Vagina (tissue), 2 donors: ENCODE measurements at regions of chr2 and their contacts with region 1.

Region 1: DNA sequence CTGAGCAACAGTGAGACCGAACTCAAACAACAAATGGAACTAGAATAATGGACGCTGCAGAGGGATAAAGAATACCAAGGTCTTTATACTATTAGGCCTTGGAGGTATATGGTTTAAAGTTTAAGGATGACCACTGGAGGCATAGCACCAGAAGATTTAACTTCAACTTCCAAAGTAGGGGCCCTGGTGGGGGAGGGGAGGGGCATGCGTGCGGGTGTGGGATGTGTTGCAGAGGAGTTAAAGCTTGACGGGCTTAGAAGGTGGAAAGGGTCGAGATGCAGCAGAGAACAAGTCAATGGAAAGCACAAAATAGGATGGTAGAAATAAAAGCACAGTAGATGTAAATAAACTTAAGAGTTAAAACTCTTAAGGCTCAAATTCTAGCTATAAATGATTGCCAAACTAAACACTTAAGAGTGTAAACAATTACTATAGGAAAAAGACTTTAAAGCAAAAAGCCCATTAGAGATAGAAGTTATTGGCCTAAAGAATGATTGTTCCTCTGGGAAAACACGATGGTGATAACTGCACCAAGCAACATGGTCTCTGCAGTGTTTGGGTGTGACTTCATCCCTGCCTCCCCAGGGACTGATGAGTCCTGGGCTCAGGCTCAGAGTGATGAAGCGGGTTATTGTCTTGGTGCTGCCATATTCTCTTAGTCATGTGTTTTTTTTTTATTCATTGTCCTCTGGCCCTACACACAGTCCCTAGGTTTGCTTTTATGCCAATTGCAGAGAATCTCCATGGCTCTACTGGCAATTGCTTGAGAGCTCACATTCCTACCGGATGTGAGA is 13.0 kb downstream of the RRM2 start:
- DNase-seq: no peak
- H3K4me3 ChIP-seq: no peak overlapping the region
- H3K27ac ChIP-seq: no peak overlapping the region
- H3K4me1 ChIP-seq: no peaks in the 10 kb centered on the region
- H3K27me3 ChIP-seq: no peaks in the 10 kb centered on the region
- CTCF ChIP-seq: no peak
- POLR2A ChIP-seq: no peak

Region 2: DNA sequence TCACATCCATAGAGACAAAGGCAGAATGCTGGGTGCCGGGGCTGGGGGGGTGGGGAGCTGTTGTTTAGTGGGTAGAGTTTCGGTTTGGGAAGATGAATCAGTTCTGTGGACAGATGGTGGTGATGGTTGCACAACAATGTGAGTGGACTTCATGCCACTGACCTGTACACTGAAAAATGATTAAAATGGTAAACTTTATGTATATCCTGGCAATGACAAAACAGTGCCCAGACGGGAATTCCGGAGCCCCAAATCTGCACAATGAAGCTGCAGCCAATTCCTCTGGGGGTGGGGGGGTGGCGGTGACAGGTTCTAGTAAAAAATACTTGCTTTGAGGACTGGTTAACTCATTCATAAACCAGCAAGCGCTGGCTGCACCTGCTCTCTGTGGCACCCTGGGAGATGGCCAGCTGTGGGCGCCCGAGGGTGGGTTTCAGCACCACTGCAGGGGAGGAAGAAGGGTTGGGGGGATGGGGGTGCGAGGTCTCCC is 85.5 kb after region 1 on chr2:
- intact Hi-C with region 1: no loop called
- DNase-seq: no peak
- H3K4me3 ChIP-seq: no peak overlapping the region
- H3K27ac ChIP-seq: no peak overlapping the region
- H3K4me1 ChIP-seq: no peaks in the 10 kb centered on the region
- H3K27me3 ChIP-seq: no peaks in the 10 kb centered on the region
- CTCF ChIP-seq: no peak
- POLR2A ChIP-seq: no peak

Region 3: DNA sequence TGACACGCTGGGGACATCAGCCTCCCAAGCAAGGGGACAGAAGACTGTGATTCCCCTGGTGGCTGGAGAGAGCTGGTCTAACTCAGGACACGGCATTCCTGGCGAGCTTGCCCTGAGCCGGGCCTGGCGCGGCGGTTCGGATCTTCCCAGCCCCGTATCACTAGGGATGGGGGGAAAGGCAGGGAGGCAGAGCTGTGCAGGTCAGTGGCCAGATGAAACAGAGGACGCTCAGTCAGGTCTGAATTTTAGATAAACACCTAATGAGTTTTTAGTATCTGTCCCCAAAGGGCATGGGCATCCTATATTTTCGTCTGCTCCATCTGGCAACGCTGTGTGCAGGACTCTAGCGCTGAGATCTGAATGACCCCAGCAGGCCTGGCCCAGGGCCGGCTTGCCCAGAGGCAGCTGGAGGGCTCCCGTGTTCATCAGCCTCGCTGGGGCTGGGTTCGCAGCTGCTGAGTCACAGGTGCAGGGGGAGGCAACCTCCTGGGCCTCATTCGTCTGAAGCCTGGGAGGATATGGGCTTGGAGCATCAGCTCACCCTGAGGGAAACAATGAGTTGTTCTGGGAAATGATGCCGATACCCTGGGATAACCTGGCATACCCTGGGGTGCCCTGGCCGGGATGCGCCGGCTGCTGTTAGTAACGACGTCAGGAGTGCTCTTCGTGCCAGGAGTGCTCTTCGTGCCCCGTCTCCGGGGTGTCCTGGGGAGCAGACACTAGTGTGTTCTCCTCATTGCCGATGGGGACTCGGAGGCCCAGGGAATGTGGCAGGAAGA is 119.1 kb after region 1 on chr2:
- intact Hi-C with region 1: no loop called
- DNase-seq: no peak
- H3K4me3 ChIP-seq: no peak overlapping the region
- H3K27ac ChIP-seq: no peak overlapping the region
- H3K4me1 ChIP-seq: no peaks in the 10 kb centered on the region
- H3K27me3 ChIP-seq: no peaks in the 10 kb centered on the region
- CTCF ChIP-seq: no peak
- POLR2A ChIP-seq: no peak

Region 4: GRCh38 chr2:10412384-10412783 is 276.9 kb after region 1 on chr2:
- intact Hi-C with region 1: loop called (anchors 10 kb)
- DNase-seq: no peak
- H3K4me3 ChIP-seq: no peak overlapping the region
- H3K27ac ChIP-seq: no peak overlapping the region
- H3K4me1 ChIP-seq: peaks cover 21% of the 10 kb centered on the region
- H3K27me3 ChIP-seq: no peaks in the 10 kb centered on the region
- CTCF ChIP-seq: no peak
- POLR2A ChIP-seq: no peak